Activated naive CD4-positive, alpha-beta T cell treated with anti-CD3 and anti-CD28 coated beads for 36 hours (primary cell): ENCODE measurements at regions of chr17 and their contacts with region 1.

Region 1: DNA sequence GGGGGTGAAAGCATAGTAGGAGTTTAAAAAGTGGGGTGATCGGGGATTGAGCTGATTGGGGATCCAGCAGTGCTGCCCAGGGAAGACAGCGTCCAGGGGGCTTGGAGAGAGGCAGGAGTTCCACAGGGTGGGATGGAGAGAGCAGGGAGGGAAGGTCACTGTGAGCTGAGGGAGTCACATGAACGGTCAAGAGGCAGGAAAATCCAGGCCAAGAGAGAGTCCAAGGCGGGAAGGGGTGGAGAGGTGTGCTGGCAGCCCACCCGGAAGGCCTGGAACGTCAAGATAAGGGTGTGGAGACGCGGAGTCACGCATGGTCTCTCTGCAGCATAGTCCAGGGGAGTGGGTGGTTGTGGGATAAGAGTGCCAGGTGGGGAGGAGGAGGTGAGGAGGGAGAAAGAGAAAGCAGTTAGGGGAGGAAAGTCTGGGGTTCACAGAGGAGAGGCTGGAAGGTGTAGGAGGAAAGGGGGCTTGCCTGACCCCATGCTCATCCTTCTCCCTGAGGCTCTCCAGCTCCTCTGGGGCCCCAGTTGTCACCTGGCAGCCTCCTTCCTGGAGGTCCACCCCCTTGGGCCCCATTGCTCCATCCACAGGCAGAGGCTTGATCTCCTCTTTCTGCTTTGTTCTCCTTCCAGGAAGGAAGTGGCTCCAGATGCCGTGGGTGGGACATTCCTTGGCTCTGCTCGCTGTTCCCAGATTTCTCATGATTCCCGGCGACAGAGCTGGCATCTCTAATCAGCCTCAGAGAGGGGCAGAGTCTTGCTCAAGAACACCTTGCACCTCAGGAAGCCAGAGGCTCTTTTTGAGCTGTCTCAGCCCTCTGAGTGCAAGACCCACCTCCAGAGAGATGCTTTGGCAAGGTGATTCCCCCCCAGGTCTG is 28.7 kb downstream of the CCR7 start:
- DNase-seq: no peak
- H3K4me3 Mint-ChIP-seq: no peak overlapping the region
- H3K27ac Mint-ChIP-seq: peak overlapping the region; percentile 42
- H3K4me1 Mint-ChIP-seq: peaks cover 90% of the 10 kb centered on the region
- H3K27me3 Mint-ChIP-seq: no peaks in the 10 kb centered on the region

Region 2: DNA sequence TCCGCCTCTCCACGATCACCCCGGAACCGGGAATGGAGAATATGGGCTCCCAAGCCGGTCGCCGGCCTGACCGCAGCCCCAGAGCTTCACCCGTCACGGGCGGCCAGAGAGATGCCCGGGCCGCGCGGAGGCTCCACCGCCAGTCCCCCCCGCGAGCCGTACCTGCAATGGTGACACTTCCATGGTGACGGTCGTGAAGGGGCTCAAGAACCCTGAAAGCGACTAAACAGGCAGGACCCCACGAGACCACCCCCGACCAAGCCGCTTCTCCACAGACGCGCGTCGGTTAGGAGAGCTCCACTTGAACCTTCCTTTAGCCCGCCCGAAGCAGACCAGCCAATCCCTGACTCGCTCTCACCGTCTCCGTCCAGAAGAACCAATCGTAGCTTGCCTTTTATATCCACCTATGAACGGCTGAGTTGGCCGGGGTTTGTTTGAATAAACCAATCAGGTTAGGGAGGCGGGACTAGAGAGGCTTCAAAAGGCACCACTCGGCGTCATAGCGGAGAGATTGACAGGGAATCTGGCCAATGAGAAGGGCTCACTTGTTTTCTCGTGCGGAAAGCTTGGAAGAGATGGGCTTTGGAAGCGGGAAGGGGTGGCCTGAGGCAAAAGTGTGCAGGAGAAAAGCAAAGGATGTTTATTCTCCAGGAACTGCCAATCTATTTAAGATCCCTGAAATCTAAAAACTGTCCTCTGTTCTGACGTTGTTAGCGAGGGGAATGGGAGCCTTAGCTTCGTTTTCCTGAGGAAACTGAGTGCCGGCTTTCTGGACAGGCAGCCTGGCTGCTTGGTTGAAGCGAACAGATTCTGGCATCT is 118.7 kb before region 1 on chr17 and contains the start of gene TOP2A:
- CTCF ChIA-PET with region 1: interaction called, 81 read pairs
- intact Hi-C with region 1: loop called (anchors 1 kb)
- DNase-seq: peak; percentile 99
- H3K4me3 Mint-ChIP-seq: peak within 1 kb of the TSS; percentile 98
- H3K27ac Mint-ChIP-seq: peak within 1 kb of the TSS; percentile 90
- H3K4me1 Mint-ChIP-seq: peaks cover 26% of the 10 kb centered on the region
- H3K27me3 Mint-ChIP-seq: peaks cover 2% of the 10 kb centered on the region
- total RNA-seq, gene TOP2A: 410 to 416 TPM

Region 3: DNA sequence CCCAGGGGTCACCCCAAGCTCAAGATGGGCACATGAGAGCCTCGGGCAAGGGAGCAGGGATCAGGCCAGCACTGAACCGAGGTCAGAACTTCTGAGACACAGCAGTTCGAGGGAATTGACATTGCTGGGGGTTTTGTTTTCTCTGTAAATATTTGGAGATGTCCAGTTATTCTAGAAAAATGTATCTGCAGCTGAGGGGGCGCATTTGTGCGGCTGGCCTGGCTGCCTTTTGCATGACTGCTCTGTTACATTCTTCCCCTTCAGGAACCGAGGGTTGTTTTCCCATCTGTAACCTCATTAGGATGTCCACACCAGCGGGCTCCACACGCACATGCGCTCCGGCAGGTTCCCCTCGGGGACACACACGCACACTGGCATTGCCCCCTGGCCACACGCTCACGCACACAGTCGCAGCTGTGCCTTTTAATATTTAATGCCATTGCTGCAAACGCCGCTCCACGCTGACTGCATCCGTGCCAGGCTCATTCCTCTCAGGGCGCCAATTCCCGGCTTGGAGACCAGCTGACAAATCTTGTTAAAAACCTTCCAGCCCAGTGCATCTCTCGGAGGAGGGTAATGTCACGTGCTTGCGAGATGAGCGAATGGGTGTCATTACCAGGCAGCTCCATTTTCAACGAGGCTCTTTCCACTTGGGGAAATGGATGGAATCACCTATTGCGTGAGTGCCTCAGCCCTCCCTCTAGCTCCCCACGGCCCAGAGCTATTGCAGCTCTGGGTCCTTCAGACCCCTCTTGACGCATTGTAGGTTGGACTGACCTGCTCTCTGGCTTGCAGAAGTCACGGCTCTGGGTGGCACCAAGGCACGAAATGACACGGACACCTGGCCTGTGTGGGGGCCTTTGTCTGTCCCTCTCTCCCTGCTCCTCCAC is 15.6 kb after region 1 on chr17:
- CTCF ChIA-PET with region 1: interaction called, 276 read pairs
- intact Hi-C with region 1: no loop called
- DNase-seq: peak; percentile 32
- H3K4me3 Mint-ChIP-seq: peak overlapping the region; percentile 35
- H3K27ac Mint-ChIP-seq: peak overlapping the region; percentile 89
- H3K4me1 Mint-ChIP-seq: peaks cover 100% of the 10 kb centered on the region
- H3K27me3 Mint-ChIP-seq: no peaks in the 10 kb centered on the region

Region 4: DNA sequence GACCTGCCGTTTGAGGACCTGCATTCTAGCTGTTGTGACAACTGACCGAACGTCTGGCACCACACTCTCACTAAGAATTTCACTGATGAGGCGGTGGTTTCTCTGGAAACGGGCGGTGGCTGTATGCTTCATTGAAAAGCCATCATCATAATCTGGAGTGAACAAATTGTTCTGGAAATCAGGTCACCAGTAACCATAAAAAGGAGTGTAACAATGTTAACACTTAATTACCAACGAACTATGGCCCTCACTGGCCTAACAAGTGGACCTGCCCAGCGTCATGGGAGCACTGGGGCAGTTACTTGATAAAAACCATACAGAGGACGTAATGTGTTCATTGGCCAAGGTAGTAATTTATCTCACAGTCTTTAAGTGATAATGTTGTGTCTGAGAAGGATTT is 95.7 kb after region 1 on chr17:
- CTCF ChIA-PET with region 1: no interaction called
- intact Hi-C with region 1: no loop called
- DNase-seq: no peak
- H3K4me3 Mint-ChIP-seq: no peak overlapping the region
- H3K27ac Mint-ChIP-seq: no peak overlapping the region
- H3K4me1 Mint-ChIP-seq: peaks cover 11% of the 10 kb centered on the region
- H3K27me3 Mint-ChIP-seq: no peaks in the 10 kb centered on the region